ENCODE measurements at regions of chr10 and their contacts with region 1.

Region 1: DNA sequence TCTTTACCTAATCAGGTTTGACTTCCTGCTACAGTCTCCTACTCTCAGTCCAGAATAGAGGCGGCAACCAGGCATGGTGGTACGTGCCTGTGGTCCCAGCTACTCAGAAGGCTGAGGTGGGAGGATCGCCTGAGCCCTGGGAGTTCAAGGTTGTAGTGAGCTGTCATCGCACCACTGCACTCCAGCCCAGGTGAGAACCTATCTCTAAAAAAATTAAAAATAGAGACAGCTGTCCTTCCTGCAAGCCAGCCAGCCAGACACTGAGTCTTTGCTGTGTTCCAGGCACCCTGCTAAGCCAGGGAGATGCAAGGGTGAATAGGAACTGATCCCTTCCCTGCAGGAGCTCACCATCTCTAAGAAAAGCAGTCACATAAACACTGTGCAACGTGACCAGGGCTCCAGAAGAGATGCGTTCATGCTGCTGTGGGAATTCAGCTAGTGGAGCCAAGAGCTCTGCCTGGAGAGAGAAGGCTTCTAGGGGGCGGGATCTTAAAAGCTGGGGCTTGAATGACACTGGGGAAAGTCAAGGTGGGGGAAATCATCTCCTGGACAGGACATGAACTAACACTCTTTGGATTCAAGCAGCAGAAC is 22.1 kb upstream of the SLIT1 start:
- DNase-seq: no peak
- ATAC-seq: no peak
- H3K4me3 ChIP-seq: no peak overlapping the region
- H3K27ac ChIP-seq: no peak overlapping the region
- H3K4me1 ChIP-seq: no peaks in the 10 kb centered on the region
- H3K27me3 ChIP-seq: no peaks in the 10 kb centered on the region
- CTCF ChIP-seq: no peak
- POLR2A ChIP-seq: no peak

Region 2: GRCh38 chr10:97072851-97073665 is 134.8 kb before region 1 on chr10:
- intact Hi-C with region 1: loop called (anchors 5 kb)
- DNase-seq: peak; percentile 79 to 91 (median 84)
- ATAC-seq: peak; percentile 81
- H3K4me3 ChIP-seq: no peak overlapping the region
- H3K27ac ChIP-seq: no peak overlapping the region
- H3K4me1 ChIP-seq: no peaks in the 10 kb centered on the region
- H3K27me3 ChIP-seq: no peaks in the 10 kb centered on the region
- CTCF ChIP-seq: peak; percentile 83 to 92 (median 84)
- POLR2A ChIP-seq: no peak

Region 3: DNA sequence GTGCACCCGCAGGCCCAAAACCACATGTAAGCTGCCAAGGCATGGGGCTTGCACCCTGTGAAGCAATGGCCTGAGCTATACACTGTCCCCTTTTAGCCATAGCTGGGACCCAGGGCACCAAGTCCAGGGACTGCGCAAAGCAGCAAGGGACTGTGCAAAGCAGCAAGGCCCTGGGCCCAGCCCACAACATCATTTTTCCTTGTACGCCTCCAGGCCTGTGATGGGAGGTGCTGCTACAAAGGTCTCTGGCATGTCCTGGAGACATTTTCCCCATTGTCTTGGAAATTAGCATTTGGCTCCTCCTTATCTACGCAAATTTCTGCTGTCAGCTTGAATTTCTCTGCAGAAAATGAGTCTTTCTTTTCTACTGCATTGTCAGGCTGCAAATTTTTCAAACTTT is 59.8 kb after region 1 on chr10:
- intact Hi-C with region 1: no loop called
- DNase-seq: no peak
- ATAC-seq: no peak
- H3K4me3 ChIP-seq: no peak overlapping the region
- H3K27ac ChIP-seq: no peak overlapping the region
- H3K4me1 ChIP-seq: no peaks in the 10 kb centered on the region
- H3K27me3 ChIP-seq: no peaks in the 10 kb centered on the region
- CTCF ChIP-seq: no peak
- POLR2A ChIP-seq: no peak